ENCODE measurements at regions of chr18 and their contacts with region 1.

Region 1: GRCh38 chr18:59837586-59837985 is 62.2 kb upstream of the PMAIP1 start:
- DNase-seq: peak; percentile 82
- ATAC-seq: peak; percentile 72
- H3K4me3 ChIP-seq: no peak overlapping the region
- H3K27ac ChIP-seq: no peak overlapping the region
- H3K4me1 ChIP-seq: peaks cover 31% of the 10 kb centered on the region
- H3K27me3 ChIP-seq: no peaks in the 10 kb centered on the region
- CTCF ChIP-seq: peak; percentile 85 to 98 (median 91)
- EP300 ChIP-seq: no peak
- POLR2A ChIP-seq: no peak
- RAD21 ChIP-seq: peak; percentile 98

Region 2: DNA sequence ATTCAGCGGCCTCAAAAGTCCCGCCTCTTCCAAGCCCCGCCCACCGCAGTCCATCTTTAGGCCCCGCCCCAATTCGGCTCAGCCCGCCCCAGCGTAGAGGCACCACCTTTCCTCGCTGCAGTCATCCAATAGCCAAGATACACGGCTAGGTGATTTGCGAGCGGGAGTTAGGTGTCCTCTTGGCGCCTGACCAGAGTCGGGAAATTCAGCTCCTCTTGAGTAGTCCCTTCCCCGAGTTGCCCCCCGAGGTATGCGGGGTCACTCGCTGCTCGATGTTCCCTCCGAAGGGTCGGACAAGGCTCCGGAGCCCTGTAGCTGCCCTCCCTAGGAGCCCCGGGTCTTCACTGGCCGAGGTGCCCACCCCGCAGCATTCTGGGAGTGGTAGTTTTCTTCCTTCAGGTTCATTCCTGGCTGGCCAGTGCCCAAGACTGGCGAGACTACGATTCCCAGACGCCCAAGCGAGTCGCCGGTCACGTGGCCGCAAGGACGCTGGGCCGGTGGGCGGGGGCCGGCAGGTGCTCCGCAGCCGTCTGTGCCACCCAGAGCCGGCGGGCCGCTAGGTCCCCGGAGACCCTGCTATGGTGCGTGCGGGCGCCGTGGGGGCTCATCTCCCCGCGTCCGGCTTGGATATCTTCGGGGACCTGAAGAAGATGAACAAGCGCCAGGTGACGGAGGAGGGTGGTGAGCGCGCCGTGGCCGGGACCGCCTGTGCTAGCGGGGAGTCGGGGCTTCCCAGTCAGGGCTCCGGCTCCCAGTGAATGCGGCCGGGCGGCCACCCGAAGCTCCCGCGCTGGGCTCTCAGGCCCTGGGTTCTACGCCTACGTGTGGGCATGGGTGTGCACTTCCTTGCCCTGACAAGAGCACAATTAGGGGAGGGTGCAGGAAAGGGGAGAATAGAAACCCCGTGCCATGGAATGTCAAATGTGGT is 698.0 kb before region 1 on chr18 and contains the start of gene SEC11C:
- CTCF ChIA-PET with region 1: no interaction called
- POLR2A ChIA-PET with region 1: no interaction called
- RAD21 ChIA-PET with region 1: no interaction called
- SMC1A ChIA-PET with region 1: no interaction called
- in situ Hi-C with region 1: no loop called
- intact Hi-C with region 1: loop called (anchors 10 kb)
- DNase-seq: peak; percentile 93
- ATAC-seq: peak; percentile 85
- H3K4me3 ChIP-seq: peak within 1 kb of the TSS; percentile 93
- H3K27ac ChIP-seq: peak within 1 kb of the TSS; percentile 98
- H3K4me1 ChIP-seq: peaks cover 8% of the 10 kb centered on the region; the same call in 1 of the 2 replicates
- H3K27me3 ChIP-seq: 0 out of 4 replicates have a peak, but pooled peaks cover 0 to 4% of the 10 kb centered on the region in 2 experiments
- CTCF ChIP-seq: no peak
- EP300 ChIP-seq: no peak
- POLR2A ChIP-seq: peak; percentile 93
- RAD21 ChIP-seq: no peak
- polyA plus RNA-seq, gene SEC11C: 213 to 304 TPM

Region 3: GRCh38 chr18:59885579-59886163 is 48.1 kb after region 1 on chr18:
- CTCF ChIA-PET with region 1: interaction called, 19 read pairs
- POLR2A ChIA-PET with region 1: interaction called, 3 read pairs
- RAD21 ChIA-PET with region 1: interaction called, 16 read pairs
- SMC1A ChIA-PET with region 1: interaction called, 42 read pairs
- in situ Hi-C with region 1: no loop called
- intact Hi-C with region 1: loop called (anchors 2 kb)
- DNase-seq: peak; percentile 78
- ATAC-seq: peak; percentile 86
- H3K4me3 ChIP-seq: peak overlapping the region; percentile 63
- H3K27ac ChIP-seq: peak overlapping the region; percentile 91
- H3K4me1 ChIP-seq: peaks cover 38% of the 10 kb centered on the region
- H3K27me3 ChIP-seq: no peaks in the 10 kb centered on the region
- CTCF ChIP-seq: no peak
- EP300 ChIP-seq: peak; percentile 88 to 95
- POLR2A ChIP-seq: no peak
- RAD21 ChIP-seq: 0 out of 2 replicates have a peak, but pooled peaks have one; percentile 4

Region 4: GRCh38 chr18:59918320-59918755 is 80.8 kb after region 1 on chr18:
- CTCF ChIA-PET with region 1: interaction called, 29 read pairs
- POLR2A ChIA-PET with region 1: interaction called, 7 read pairs
- RAD21 ChIA-PET with region 1: interaction called, 43 read pairs
- SMC1A ChIA-PET with region 1: interaction called, 111 read pairs
- in situ Hi-C with region 1: no loop called
- intact Hi-C with region 1: loop called (anchors 1 kb)
- DNase-seq: peak; percentile 80
- ATAC-seq: peak; percentile 82
- H3K4me3 ChIP-seq: peak overlapping the region; percentile 5; the same call in 1 of the 2 replicates
- H3K27ac ChIP-seq: peak overlapping the region; percentile 74
- H3K4me1 ChIP-seq: peaks cover 47% of the 10 kb centered on the region
- H3K27me3 ChIP-seq: no peaks in the 10 kb centered on the region
- CTCF ChIP-seq: no peak
- EP300 ChIP-seq: peak in 1 of 2 experiments; percentile 27; a peak in 1 of 4 replicates
- POLR2A ChIP-seq: peak; percentile 44; the same call in 1 of the 2 replicates
- RAD21 ChIP-seq: no peak

Region 5: DNA sequence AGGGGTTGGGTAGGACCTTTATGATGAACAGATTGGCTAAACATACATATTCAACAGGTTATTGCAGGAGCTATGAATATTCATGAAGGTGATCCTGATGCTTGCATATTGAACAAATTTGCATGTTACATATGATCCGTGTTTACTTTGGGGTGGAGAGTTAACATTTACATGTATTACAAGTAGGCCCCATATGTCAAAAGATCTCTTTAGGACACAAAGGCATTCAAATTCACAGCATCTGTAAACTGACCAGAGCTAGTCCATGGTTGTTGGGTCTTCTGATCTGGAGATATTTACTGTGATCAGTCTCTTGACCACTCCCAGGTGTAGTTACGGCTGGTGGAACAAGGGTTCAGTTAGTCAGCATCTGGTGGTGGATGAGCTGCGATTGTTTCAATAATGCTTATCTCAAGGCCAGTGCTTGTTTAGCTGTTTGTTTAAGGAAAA is 142.6 kb after region 1 on chr18:
- CTCF ChIA-PET with region 1: interaction called, 235 read pairs
- POLR2A ChIA-PET with region 1: no interaction called
- RAD21 ChIA-PET with region 1: interaction called, 8 read pairs
- SMC1A ChIA-PET with region 1: interaction called, 118 read pairs
- in situ Hi-C with region 1: no loop called
- intact Hi-C with region 1: no loop called
- DNase-seq: no peak
- ATAC-seq: no peak
- H3K4me3 ChIP-seq: no peak overlapping the region
- H3K27ac ChIP-seq: no peak overlapping the region
- H3K4me1 ChIP-seq: no peaks in the 10 kb centered on the region
- H3K27me3 ChIP-seq: no peaks in the 10 kb centered on the region
- CTCF ChIP-seq: no peak
- EP300 ChIP-seq: no peak
- POLR2A ChIP-seq: no peak
- RAD21 ChIP-seq: no peak

Region 6: GRCh38 chr18:60020601-60020925 is 183.0 kb after region 1 on chr18:
- CTCF ChIA-PET with region 1: interaction called, 3 read pairs
- POLR2A ChIA-PET with region 1: no interaction called
- RAD21 ChIA-PET with region 1: interaction called, 10 read pairs
- SMC1A ChIA-PET with region 1: no interaction called
- in situ Hi-C with region 1: no loop called
- intact Hi-C with region 1: no loop called
- DNase-seq: no peak
- ATAC-seq: no peak
- H3K4me3 ChIP-seq: no peak overlapping the region
- H3K27ac ChIP-seq: no peak overlapping the region
- H3K4me1 ChIP-seq: no peaks in the 10 kb centered on the region
- H3K27me3 ChIP-seq: no peaks in the 10 kb centered on the region
- CTCF ChIP-seq: no peak
- EP300 ChIP-seq: no peak
- POLR2A ChIP-seq: no peak
- RAD21 ChIP-seq: no peak

Region 7: GRCh38 chr18:60549338-60549960 is 711.9 kb after region 1 on chr18:
- CTCF ChIA-PET with region 1: no interaction called
- POLR2A ChIA-PET with region 1: no interaction called
- RAD21 ChIA-PET with region 1: no interaction called
- SMC1A ChIA-PET with region 1: interaction called, 3 read pairs
- in situ Hi-C with region 1: loop called (anchors 10 kb)
- intact Hi-C with region 1: loop called (anchors 5 kb)
- DNase-seq: no peak
- ATAC-seq: peak; percentile 67
- H3K4me3 ChIP-seq: no peak overlapping the region
- H3K27ac ChIP-seq: no peak overlapping the region
- H3K4me1 ChIP-seq: no peaks in the 10 kb centered on the region
- H3K27me3 ChIP-seq: no peaks in the 10 kb centered on the region
- CTCF ChIP-seq: peak; percentile 57 to 82 (median 66)
- EP300 ChIP-seq: no peak
- POLR2A ChIP-seq: no peak
- RAD21 ChIP-seq: peak; percentile 88

Measured in GM12878 (cell line).